ENCODE measurements at regions of chr9 and their contacts with region 1.

Region 1: DNA sequence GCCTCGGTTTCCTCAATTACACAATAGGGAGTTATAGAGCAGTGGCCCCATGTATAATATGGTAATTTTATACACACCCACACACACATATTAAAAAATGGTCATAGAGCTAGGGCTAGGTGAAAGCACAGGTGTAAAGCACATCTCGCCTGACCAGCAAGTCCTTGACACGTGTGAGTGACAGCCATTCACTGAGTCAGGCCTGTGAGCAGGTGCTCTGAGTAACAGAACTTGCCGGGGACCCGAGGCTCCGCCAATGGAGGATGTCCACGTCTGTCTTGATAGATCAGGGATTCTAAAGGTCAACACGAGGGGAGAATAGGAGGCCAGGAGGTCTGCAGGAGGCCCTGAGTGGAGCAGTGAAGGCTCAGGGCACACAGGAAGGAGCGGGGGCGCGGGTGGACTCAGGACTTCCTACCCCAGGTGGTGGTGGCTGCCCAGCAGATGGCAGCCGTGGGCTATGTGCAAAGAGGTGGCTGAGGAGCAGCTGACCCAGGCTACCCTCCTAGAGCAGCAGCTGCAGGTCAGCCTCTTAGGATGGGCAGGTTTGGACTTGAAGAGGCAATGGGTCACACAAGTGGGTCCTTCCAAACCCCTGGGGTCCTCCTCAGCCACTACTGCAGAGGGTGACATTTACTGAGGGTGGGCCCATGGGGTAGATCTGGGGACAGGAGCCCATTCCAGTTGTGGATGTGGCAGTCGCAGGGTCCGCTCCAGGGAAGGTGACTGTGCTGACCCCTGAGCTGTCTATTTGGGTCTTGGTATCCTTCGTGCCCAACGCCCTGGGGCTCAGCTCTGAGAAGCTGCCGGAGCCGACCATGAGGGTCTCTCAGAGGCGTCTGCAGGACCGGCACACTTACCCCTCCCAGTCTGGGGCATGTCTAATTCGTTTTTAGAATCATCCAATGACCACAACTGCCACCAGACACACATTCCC is 45.9 kb downstream of the PRRT1B start:
- DNase-seq: peak; percentile 91
- ATAC-seq: peak; percentile 91

Region 2: DNA sequence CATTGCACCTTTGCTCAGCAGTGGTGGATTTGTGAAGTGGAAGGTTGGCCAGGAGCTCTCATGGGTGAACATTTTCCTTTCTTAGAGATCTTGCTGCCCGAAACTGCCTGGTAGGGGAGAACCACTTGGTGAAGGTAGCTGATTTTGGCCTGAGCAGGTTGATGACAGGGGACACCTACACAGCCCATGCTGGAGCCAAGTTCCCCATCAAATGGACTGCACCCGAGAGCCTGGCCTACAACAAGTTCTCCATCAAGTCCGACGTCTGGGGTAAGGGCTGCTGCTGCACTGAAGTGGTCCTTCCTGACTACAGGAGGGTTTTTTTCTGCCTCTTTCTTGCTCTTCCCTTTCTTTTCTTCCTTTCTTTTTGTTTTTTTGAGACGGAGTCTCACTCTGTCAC is 716.4 kb before region 1 on chr9:
- intact Hi-C with region 1: no loop called
- DNase-seq: peak; percentile 32
- ATAC-seq: no peak

Region 3: DNA sequence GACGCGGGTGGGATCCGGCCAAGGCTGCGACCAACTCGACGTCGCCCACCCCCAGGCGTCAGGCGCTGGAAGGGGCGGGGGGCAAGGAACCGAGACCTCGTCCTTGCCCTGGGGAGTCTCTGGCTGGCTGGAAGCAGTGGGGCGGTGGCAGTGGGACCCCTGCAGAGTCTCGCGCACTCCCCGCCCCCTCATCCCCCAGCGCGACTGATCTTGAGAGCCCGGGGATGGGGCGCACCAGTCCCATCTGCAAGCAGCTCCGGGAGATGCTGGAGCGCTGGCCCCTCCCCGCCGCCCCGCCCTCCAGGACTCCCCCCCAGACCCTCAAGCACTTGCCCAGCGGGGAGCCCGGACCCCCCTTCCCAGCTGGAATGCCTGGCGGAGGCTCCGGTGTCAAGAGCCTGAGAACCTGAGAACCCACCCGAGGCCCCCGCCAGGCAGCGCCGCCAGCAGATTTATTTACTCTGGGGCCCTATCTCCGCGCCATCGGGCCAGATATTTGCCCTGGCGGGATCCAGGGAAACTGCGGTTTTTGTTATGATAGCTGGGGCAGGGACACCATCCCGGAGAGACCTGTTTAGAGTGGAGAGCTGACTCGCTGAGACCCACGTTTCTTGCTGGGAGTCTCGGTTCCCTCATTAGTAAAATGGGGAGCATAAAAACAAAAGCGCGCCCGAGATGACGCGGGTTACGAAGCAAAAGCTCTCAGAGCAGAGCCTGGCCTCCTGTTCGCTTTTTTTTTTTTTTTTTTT is 44.7 kb before region 1 on chr9:
- intact Hi-C with region 1: no loop called
- DNase-seq: no peak
- ATAC-seq: no peak

Region 4: GRCh38 chr9:131739980-131740648 is 148.9 kb after region 1 on chr9 and contains the start of gene RAPGEF1:
- intact Hi-C with region 1: loop called (anchors 1 kb)
- DNase-seq: peak; percentile 90
- ATAC-seq: peak; percentile 71
- total RNA-seq, gene RAPGEF1: 125 TPM